Caco-2 (cell line): ENCODE measurements at regions of chrX and their contacts with region 1.

Region 1: DNA sequence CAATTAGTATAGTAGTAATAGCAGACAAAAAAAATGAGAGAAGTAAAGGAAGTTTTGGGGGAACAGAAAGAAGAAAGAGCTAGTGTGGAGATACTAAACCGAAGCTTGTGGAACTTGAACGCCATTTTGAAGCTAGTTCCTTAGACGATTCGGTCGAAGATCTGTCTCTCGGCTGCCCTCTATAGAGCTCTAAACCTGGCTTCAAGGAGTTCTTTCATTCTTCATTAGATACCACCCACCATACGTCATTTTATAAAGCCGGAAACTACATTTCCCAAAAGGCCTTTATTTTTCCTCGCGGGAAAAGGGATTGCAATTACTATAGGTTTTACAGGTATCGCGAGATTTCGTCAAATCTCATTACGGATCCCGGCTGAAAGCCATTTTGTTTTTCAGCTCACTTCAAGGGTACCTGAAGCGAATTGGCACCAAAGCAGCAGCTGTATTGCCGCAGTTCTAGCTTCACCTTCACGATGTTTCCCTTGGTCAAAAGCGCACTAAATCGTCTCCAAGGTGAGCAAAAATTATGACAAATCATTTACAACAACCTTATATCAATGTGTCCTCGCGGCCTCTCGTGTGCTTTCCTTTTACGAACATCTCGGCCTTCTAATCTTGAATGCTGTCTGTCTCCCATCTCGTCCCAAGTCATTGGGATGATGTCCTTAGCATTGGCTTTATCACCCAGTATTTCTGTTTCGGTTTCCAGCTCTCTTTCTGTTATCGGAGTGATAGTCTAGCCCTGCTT is at the start of gene COX7B:
- DNase-seq: peak; percentile 81 to 84
- H3K4me3 ChIP-seq: peak within 1 kb of the TSS; percentile 43
- H3K4me3 Mint-ChIP-seq: peak within 1 kb of the TSS; percentile 95
- H3K27ac Mint-ChIP-seq: peak within 1 kb of the TSS; percentile 76
- H3K4me1 ChIP-seq: no peaks in the 10 kb centered on the region
- H3K4me1 Mint-ChIP-seq: no peaks in the 10 kb centered on the region
- H3K27me3 ChIP-seq: no peaks in the 10 kb centered on the region
- H3K27me3 Mint-ChIP-seq: no peaks in the 10 kb centered on the region
- CTCF ChIP-seq: peak in 1 of 2 experiments; percentile 45
- total RNA-seq, gene COX7B: 243 and 283 TPM in 2 replicates

Region 2: DNA sequence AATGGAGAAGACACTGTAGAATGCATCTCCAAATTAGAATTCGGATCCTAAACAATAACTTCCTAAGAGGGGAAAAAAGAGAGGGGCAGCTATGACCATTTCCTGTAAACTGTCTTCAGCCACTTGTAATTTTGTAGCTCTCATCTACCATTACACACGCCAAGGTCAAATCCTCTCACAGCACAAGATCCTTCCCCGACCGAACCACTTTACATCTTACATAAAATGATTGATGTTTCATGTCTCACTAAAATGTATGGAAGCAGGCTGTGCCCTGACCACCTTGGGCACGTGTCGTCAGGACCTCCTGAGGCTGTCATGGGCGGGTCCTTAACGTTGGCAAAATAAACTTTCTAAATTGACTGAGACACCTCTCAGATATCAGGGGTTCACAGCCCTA is 1750.5 kb before region 1 on chrX:
- CTCF ChIA-PET with region 1: no interaction called
- POLR2A ChIA-PET with region 1: no interaction called
- intact Hi-C with region 1: loop called (anchors 5 kb)
- DNase-seq: no peak
- H3K4me3 ChIP-seq: peak overlapping the region; percentile 5
- H3K4me3 Mint-ChIP-seq: peak overlapping the region; percentile 66
- H3K27ac Mint-ChIP-seq: peak overlapping the region; percentile 76
- H3K4me1 ChIP-seq: peaks cover 12% of the 10 kb centered on the region; the same call in 1 of the 2 replicates
- H3K4me1 Mint-ChIP-seq: no peaks in the 10 kb centered on the region
- H3K27me3 ChIP-seq: no peaks in the 10 kb centered on the region
- H3K27me3 Mint-ChIP-seq: no peaks in the 10 kb centered on the region
- CTCF ChIP-seq: no peak

Region 3: GRCh38 chrX:77061545-77061944 is 837.7 kb before region 1 on chrX:
- CTCF ChIA-PET with region 1: no interaction called
- POLR2A ChIA-PET with region 1: no interaction called
- intact Hi-C with region 1: no loop called
- DNase-seq: no peak
- H3K4me3 ChIP-seq: no peak overlapping the region
- H3K4me3 Mint-ChIP-seq: no peak overlapping the region
- H3K27ac Mint-ChIP-seq: no peak overlapping the region
- H3K4me1 ChIP-seq: no peaks in the 10 kb centered on the region
- H3K4me1 Mint-ChIP-seq: no peaks in the 10 kb centered on the region
- H3K27me3 ChIP-seq: no peaks in the 10 kb centered on the region
- H3K27me3 Mint-ChIP-seq: no peaks in the 10 kb centered on the region
- CTCF ChIP-seq: no peak

Region 4: DNA sequence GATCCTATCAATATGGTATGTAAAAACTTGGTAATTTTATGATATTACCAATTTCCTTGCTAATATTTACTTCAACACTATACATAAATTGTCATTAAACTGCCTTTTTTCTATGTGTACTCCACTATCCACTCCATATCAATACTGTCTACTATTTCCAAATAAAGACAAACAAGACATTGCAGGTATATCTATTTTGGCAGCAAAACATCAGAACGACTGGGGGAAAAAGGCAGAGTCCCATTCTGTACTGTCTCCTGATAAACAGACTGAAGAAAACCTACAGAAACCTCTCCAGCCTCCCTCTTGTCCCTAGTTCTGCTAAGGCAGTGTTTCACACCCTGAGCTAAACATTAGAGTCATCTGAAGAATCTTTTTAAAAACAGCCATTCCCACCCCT is 209.9 kb before region 1 on chrX:
- CTCF ChIA-PET with region 1: no interaction called
- POLR2A ChIA-PET with region 1: interaction called, 7 read pairs
- intact Hi-C with region 1: loop called (anchors 10 kb)
- DNase-seq: no peak
- H3K4me3 ChIP-seq: no peak overlapping the region
- H3K4me3 Mint-ChIP-seq: no peak overlapping the region
- H3K27ac Mint-ChIP-seq: no peak overlapping the region
- H3K4me1 ChIP-seq: no peaks in the 10 kb centered on the region
- H3K4me1 Mint-ChIP-seq: no peaks in the 10 kb centered on the region
- H3K27me3 ChIP-seq: no peaks in the 10 kb centered on the region
- H3K27me3 Mint-ChIP-seq: no peaks in the 10 kb centered on the region
- CTCF ChIP-seq: no peak

Region 5: GRCh38 chrX:77785486-77786364 is 113.5 kb before region 1 on chrX and contains the start of gene ATRX:
- CTCF ChIA-PET with region 1: no interaction called
- POLR2A ChIA-PET with region 1: no interaction called
- intact Hi-C with region 1: loop called (anchors 5 kb)
- DNase-seq: peak; percentile 75 to 78
- H3K4me3 ChIP-seq: peak within 1 kb of the TSS; percentile 43
- H3K4me3 Mint-ChIP-seq: peak within 1 kb of the TSS; percentile 98
- H3K27ac Mint-ChIP-seq: peak within 1 kb of the TSS; percentile 100
- H3K4me1 ChIP-seq: peaks cover 4% of the 10 kb centered on the region; the same call in 1 of the 2 replicates
- H3K4me1 Mint-ChIP-seq: no peaks in the 10 kb centered on the region
- H3K27me3 ChIP-seq: no peaks in the 10 kb centered on the region
- H3K27me3 Mint-ChIP-seq: no peaks in the 10 kb centered on the region
- CTCF ChIP-seq: no peak
- total RNA-seq, gene ATRX: 61.2 and 71.4 TPM in 2 replicates

Region 6: GRCh38 chrX:77910108-77910840 is 11.0 kb after region 1 on chrX and contains the start of gene ATP7A:
- CTCF ChIA-PET with region 1: interaction called, 8 read pairs
- POLR2A ChIA-PET with region 1: interaction called, 12 read pairs
- intact Hi-C with region 1: loop called (anchors 1 kb)
- DNase-seq: peak; percentile 88 to 92
- H3K4me3 ChIP-seq: peak within 1 kb of the TSS; percentile 65
- H3K4me3 Mint-ChIP-seq: peak within 1 kb of the TSS; percentile 94
- H3K27ac Mint-ChIP-seq: peak within 1 kb of the TSS; percentile 90
- H3K4me1 ChIP-seq: no peaks in the 10 kb centered on the region
- H3K4me1 Mint-ChIP-seq: no peaks in the 10 kb centered on the region
- H3K27me3 ChIP-seq: no peaks in the 10 kb centered on the region
- H3K27me3 Mint-ChIP-seq: no peaks in the 10 kb centered on the region
- CTCF ChIP-seq: peak; percentile 36 to 71
- total RNA-seq, gene ATP7A: 3.1 and 3.6 TPM in 2 replicates

Region 7: DNA sequence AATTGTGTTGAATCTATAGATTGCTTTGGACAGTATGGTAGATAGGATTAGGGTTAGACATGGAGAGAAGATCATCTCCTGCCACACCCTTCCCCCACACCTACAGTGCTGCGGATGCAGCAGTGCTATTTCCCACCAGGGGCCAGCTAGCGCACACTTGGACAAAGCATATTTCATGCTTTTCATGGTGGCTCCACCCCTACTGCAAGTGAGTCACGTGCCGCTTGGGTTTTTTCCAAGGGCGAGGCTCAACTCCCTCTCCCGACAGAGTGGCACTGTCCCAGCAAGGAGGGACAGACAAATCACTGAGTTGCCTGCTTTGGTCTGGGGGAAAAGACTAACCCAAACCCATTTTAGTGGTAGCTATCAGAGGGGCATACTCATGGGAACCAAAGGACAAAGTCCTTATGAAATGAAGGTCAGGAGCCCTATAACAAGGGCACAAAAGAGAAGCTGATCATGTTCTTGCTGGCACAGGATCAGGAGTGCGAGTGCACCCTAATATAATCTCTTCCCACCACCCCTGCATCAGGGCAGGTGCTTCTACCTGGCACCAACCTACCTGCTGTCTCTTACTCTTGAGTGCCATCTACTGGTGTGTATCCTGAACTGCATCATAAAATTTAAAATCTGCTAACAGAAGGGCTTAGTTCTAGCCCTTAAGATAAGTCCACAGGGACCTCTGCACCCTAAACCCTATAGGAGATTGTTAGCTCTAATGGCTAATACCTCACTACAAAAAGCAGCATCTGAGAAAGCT is 125.3 kb after region 1 on chrX:
- CTCF ChIA-PET with region 1: no interaction called
- POLR2A ChIA-PET with region 1: no interaction called
- intact Hi-C with region 1: loop called (anchors 5 kb)
- DNase-seq: peak; percentile 33 to 40
- H3K4me3 ChIP-seq: no peak overlapping the region
- H3K4me3 Mint-ChIP-seq: no peak overlapping the region
- H3K27ac Mint-ChIP-seq: no peak overlapping the region
- H3K4me1 ChIP-seq: no peaks in the 10 kb centered on the region
- H3K4me1 Mint-ChIP-seq: no peaks in the 10 kb centered on the region
- H3K27me3 ChIP-seq: no peaks in the 10 kb centered on the region
- H3K27me3 Mint-ChIP-seq: no peaks in the 10 kb centered on the region
- CTCF ChIP-seq: peak; percentile 42 to 50

Region 8: GRCh38 chrX:78092296-78092695 is 193.0 kb after region 1 on chrX:
- CTCF ChIA-PET with region 1: no interaction called
- POLR2A ChIA-PET with region 1: no interaction called
- intact Hi-C with region 1: no loop called
- DNase-seq: peak in 1 of 2 experiments; percentile 9
- H3K4me3 ChIP-seq: no peak overlapping the region
- H3K4me3 Mint-ChIP-seq: no peak overlapping the region
- H3K27ac Mint-ChIP-seq: no peak overlapping the region
- H3K4me1 ChIP-seq: no peaks in the 10 kb centered on the region
- H3K4me1 Mint-ChIP-seq: no peaks in the 10 kb centered on the region
- H3K27me3 ChIP-seq: no peaks in the 10 kb centered on the region
- H3K27me3 Mint-ChIP-seq: peaks cover 11% of the 10 kb centered on the region
- CTCF ChIP-seq: peak in 1 of 2 experiments; percentile 37

Region 9: DNA sequence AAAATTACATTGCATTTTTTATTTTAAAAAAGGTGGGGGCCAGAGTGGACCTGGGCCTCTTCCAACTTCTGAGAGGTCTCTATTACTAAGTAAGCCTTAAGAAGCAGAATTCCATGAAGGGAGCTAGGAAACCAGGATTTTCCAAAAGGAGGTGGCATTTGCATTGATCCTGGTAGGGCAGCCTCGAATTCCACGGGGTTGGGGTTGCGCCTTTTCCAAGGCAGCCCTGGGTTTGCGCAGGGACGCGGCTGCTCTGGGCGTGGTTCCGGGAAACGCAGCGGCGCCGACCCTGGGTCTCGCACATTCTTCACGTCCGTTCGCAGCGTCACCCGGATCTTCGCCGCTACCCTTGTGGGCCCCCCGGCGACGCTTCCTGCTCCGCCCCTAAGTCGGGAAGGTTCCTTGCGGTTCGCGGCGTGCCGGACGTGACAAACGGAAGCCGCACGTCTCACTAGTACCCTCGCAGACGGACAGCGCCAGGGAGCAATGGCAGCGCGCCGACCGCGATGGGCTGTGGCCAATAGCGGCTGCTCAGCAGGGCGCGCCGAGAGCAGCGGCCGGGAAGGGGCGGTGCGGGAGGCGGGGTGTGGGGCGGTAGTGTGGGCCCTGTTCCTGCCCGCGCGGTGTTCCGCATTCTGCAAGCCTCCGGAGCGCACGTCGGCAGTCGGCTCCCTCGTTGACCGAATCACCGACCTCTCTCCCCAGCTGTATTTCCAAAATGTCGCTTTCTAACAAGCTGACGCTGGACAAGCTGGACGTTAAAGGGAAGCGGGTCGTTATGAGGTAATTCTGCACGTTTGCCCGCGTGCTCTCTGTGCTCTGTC is 204.6 kb after region 1 on chrX and contains the start of gene PGK1:
- CTCF ChIA-PET with region 1: no interaction called
- POLR2A ChIA-PET with region 1: interaction called, 3 read pairs
- intact Hi-C with region 1: loop called (anchors 2 kb)
- DNase-seq: peak; percentile 94 to 97
- H3K4me3 ChIP-seq: peak within 1 kb of the TSS; percentile 66
- H3K4me3 Mint-ChIP-seq: peak within 1 kb of the TSS; percentile 88
- H3K27ac Mint-ChIP-seq: peak within 1 kb of the TSS; percentile 85
- H3K4me1 ChIP-seq: no peaks in the 10 kb centered on the region
- H3K4me1 Mint-ChIP-seq: peaks cover 13% of the 10 kb centered on the region
- H3K27me3 ChIP-seq: no peaks in the 10 kb centered on the region
- H3K27me3 Mint-ChIP-seq: no peaks in the 10 kb centered on the region
- CTCF ChIP-seq: no peak
- total RNA-seq, gene PGK1: 391 and 425 TPM in 2 replicates